Endothelial cell of umbilical vein (primary cell): ENCODE measurements at regions of chr6 and their contacts with region 1.

Region 1: DNA sequence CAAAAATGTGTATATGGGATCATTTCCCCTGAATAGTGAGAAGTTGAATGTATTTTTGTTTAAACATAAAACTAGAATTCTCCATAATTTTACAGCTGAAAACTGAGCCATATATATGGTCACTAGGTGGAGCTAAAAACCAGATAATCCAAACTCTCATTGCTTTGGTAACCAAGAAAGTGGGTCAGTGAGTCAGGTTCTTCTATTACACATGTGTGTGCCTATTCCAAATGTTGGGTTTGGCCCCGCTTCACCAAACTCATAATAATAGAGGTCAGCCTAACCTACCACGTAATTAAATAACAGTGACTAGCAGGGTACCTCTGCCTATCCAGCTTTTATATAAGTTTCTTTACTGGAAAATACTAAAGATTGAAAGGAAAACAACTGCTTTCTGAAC is 19.3 kb upstream of the RNGTT start:
- DNase-seq: peak; percentile 70
- H3K4me3 ChIP-seq: no peak overlapping the region
- H3K27ac ChIP-seq: no peak overlapping the region
- H3K4me1 ChIP-seq: no peaks in the 10 kb centered on the region
- H3K27me3 ChIP-seq: peaks cover 0 to 1% of the 10 kb centered on the region in 2 experiments
- CTCF ChIP-seq: peak; percentile 34 to 48
- POLR2A ChIP-seq: no peak

Region 2: GRCh38 chr6:88997327-88997726 is 14.6 kb after region 1 on chr6:
- CTCF ChIA-PET with region 1: interaction called, 11 read pairs
- POLR2A ChIA-PET with region 1: no interaction called
- dilution Hi-C with region 1: no loop called
- intact Hi-C with region 1: no loop called
- DNase-seq: no peak
- H3K4me3 ChIP-seq: no peak overlapping the region
- H3K27ac ChIP-seq: no peak overlapping the region
- H3K4me1 ChIP-seq: no peaks in the 10 kb centered on the region
- H3K27me3 ChIP-seq: peaks cover 0 to 2% of the 10 kb centered on the region in 2 experiments
- CTCF ChIP-seq: no peak
- POLR2A ChIP-seq: no peak

Region 3: DNA sequence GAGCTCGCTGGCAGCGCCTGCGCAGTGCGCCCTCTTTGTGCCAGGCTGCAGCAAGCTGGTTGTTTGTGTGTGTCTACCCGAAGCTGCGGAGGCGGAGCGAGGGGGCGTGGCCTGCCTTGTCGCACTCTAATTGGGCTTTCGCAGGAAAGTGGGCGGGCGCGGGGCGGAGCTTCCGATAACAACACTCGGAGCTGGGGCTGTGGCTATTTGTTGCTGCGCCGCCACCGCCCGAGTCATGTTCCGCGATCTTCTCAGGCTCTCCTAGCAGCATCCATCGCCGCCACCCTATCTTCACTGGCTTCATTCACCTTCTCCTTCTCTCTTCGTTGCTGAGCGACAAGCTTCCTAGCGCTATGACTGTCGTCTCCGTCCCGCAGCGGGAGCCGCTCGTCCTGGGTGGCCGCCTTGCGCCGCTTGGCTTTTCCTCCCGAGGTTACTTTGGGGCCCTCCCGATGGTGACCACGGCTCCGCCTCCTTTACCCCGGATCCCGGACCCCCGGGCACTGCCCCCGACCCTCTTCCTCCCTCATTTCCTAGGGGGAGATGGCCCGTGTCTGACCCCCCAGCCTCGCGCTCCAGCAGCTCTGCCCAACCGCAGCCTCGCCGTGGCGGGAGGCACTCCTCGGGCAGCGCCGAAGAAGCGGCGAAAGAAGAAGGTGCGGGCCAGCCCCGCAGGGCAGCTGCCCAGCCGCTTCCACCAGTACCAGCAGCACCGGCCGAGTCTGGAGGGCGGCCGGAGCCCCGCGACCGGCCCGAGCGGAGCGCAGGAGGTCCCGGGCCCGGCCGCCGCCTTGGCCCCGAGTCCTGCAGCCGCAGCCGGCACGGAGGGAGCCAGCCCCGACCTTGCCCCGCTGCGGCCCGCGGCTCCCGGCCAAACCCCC is 98.1 kb after region 1 on chr6 and contains the start of gene PNRC1:
- CTCF ChIA-PET with region 1: interaction called, 24 read pairs
- POLR2A ChIA-PET with region 1: no interaction called
- dilution Hi-C with region 1: no loop called
- intact Hi-C with region 1: loop called (anchors 1 kb)
- DNase-seq: peak; percentile 99
- H3K4me3 ChIP-seq: peak within 1 kb of the TSS; percentile 89 to 97 (median 94)
- H3K27ac ChIP-seq: peak within 1 kb of the TSS; percentile 92
- H3K4me1 ChIP-seq: peaks cover 11% of the 10 kb centered on the region
- H3K27me3 ChIP-seq: no peaks in the 10 kb centered on the region
- CTCF ChIP-seq: no peak
- POLR2A ChIP-seq: peak; percentile 91
- total RNA-seq, gene PNRC1: 87.9 and 88.4 TPM in 2 replicates

Region 4: GRCh38 chr6:89145787-89146646 is 163.3 kb after region 1 on chr6 and contains the start of gene PM20D2:
- CTCF ChIA-PET with region 1: interaction called, 18 read pairs
- POLR2A ChIA-PET with region 1: no interaction called
- dilution Hi-C with region 1: no loop called
- intact Hi-C with region 1: no loop called
- DNase-seq: peak; percentile 63
- H3K4me3 ChIP-seq: peak within 1 kb of the TSS; percentile 52 to 83 (median 79)
- H3K27ac ChIP-seq: peak within 1 kb of the TSS; percentile 72
- H3K4me1 ChIP-seq: peaks cover 10% of the 10 kb centered on the region
- H3K27me3 ChIP-seq: peaks cover 5 to 7% of the 10 kb centered on the region in 2 experiments
- CTCF ChIP-seq: no peak
- POLR2A ChIP-seq: peak; percentile 44
- total RNA-seq, gene PM20D2: 8.3 and 10.9 TPM in 2 replicates

Region 5: DNA sequence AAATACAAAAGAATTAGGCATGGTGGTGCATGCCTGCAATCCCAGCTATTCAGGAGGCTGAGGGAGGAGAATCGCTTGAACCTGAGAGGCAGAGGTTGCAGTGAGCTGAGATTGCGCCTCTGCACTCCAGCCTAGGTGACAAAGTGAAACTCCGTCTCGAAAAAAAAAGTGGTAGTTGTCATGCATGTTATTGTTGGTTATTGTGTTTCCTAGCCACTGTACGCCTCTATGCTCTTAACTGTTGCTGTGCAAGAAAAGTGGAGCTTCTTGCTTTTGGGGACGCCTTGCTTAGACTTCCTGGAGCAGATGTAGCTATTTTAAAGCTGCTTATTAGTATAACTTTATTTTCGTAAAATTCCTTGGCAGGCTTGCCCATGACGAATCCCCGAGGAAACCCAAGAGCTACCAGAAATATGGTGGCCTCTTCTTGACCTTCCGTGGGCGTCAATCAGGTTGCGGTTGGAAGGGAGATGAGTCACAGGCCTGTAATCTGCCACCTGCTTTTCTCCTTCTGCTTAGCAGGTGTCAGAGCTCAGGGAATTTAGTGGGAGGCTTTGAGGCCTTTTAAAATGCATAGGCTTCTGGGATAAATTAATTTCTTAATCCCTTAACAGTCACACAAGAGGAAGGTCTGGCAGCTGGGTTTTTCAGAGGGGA is 315.1 kb after region 1 on chr6:
- CTCF ChIA-PET with region 1: interaction called, 11 read pairs
- POLR2A ChIA-PET with region 1: no interaction called
- dilution Hi-C with region 1: no loop called
- intact Hi-C with region 1: no loop called
- DNase-seq: peak; percentile 97
- H3K4me3 ChIP-seq: peak overlapping the region in 1 of 3 experiments; percentile 47
- H3K27ac ChIP-seq: peak overlapping the region; percentile 84
- H3K4me1 ChIP-seq: peaks cover 28% of the 10 kb centered on the region
- H3K27me3 ChIP-seq: no peaks in the 10 kb centered on the region
- CTCF ChIP-seq: no peak
- POLR2A ChIP-seq: no peak

Region 6: GRCh38 chr6:89371849-89372505 is 389.3 kb after region 1 on chr6:
- CTCF ChIA-PET with region 1: interaction called, 31 read pairs
- POLR2A ChIA-PET with region 1: no interaction called
- dilution Hi-C with region 1: no loop called
- intact Hi-C with region 1: loop called (anchors 1 kb)
- DNase-seq: peak; percentile 61
- H3K4me3 ChIP-seq: no peak overlapping the region
- H3K27ac ChIP-seq: no peak overlapping the region
- H3K4me1 ChIP-seq: peaks cover 3% of the 10 kb centered on the region
- H3K27me3 ChIP-seq: no peaks in the 10 kb centered on the region
- CTCF ChIP-seq: peak; percentile 96 to 98
- POLR2A ChIP-seq: no peak